B cell (primary cell): ENCODE measurements at regions of chr1 and their contacts with region 1.

Region 1: GRCh38 chr1:160098852-160099561 is 588 bp upstream of the IGSF8 start:
- DNase-seq: peak; percentile 96
- ATAC-seq: peak; percentile 91
- H3K4me3 ChIP-seq: peak overlapping the region; percentile 63 to 79 (median 72)
- H3K4me3 Mint-ChIP-seq: peak overlapping the region; percentile 88
- H3K27ac ChIP-seq: peak overlapping the region; percentile 95 to 99
- H3K27ac Mint-ChIP-seq: peak overlapping the region; percentile 86
- H3K4me1 ChIP-seq: peaks cover 33 to 45% of the 10 kb centered on the region in 2 donors
- H3K4me1 Mint-ChIP-seq: peaks cover 47% of the 10 kb centered on the region
- H3K27me3 ChIP-seq: no peaks in the 10 kb centered on the region
- H3K27me3 Mint-ChIP-seq: no peaks in the 10 kb centered on the region
- CTCF ChIP-seq: no peak

Region 2: DNA sequence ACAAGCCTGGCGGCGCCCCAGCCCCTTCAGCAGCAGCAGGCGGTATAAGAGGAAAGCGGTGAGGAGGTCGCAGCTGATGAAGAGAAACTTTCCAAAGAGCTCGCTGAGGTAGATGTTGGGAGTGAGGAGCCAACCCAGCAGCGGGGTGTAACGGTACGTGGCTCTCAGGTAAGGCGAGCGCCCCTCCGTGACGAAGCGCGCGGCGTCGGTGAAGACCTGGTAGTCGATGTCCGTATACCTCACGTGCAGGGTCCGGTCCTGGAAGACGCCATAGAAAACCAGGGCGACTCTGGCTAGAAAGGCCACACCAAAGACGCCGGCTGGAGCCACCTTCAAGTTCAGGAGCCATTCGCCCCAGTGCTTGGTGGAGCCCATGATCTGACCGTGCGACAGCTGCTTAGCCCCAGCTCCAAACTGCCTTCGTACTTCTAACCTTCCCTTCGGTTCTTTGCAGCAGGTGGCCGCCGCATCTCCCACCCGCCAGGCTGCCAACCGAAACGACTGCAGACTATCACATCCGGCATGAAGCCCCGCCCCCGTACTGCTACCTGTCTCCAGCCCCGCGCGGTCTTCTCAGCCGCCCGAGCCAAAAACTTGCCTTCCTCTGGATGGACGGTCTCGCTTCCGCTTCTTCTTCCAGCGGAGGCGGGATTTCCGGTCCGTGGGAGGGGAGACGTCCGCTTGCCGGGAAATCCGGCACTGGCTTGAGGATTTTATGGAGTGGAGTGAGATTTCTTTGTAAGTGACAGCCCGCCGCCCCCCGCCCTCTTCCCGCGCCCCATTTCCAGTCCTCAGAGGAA is 67.4 kb before region 1 on chr1 and contains the start of gene PIGM:
- CTCF ChIA-PET with region 1: interaction called, 14 read pairs
- POLR2A ChIA-PET with region 1: interaction called, 4 read pairs
- intact Hi-C with region 1: loop called (anchors 2 kb)
- DNase-seq: peak; percentile 90
- ATAC-seq: peak; percentile 96
- H3K4me3 ChIP-seq: peak within 1 kb of the TSS; percentile 51 to 78 (median 74)
- H3K4me3 Mint-ChIP-seq: peak within 1 kb of the TSS; percentile 99
- H3K27ac ChIP-seq: peak within 1 kb of the TSS in 1 of 2 donors; percentile 57
- H3K27ac Mint-ChIP-seq: peak within 1 kb of the TSS; percentile 88
- H3K4me1 ChIP-seq: peaks cover 19 to 20% of the 10 kb centered on the region in 2 donors
- H3K4me1 Mint-ChIP-seq: peaks cover 27% of the 10 kb centered on the region
- H3K27me3 ChIP-seq: no peaks in the 10 kb centered on the region
- H3K27me3 Mint-ChIP-seq: no peaks in the 10 kb centered on the region
- CTCF ChIP-seq: no peak
- total RNA-seq, gene PIGM: 6.0 and 7.4 TPM in 2 replicates

Region 3: DNA sequence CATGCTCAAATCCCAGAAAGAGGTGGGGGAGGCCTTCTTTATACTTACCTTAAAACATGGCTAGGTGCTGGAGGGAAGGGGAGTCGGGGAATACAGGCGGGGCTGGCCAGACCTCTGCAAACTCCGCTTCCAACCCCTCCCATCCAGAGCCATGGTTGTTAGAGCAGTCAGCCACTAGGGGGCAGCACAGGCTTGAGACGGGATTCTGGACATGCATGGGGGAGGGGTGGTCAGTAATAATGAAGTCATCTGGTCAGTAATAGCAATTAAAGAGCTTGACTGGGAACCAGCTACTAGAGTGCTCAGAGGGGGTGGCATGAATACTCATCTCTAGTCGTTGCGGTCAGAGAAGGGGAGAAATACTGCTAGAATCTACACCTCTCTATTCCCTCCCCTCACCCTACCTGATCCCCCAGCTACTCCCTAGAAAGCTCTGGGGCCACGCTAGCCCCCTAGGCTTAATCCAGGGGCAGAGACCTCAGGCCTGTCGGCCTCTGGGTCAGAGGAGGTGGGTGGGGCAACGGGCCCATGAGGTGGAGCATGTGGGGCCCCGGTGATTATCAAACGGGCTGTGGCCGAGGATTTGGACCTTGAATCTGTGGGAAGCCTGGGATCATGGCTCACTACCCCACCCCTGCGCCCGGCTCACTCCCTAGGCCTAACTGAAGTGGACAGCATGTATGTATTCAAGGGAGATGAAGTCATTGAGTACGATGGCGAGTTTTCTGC is 94.2 kb after region 1 on chr1:
- CTCF ChIA-PET with region 1: interaction called, 20 read pairs
- POLR2A ChIA-PET with region 1: interaction called, 3 read pairs
- intact Hi-C with region 1: loop called (anchors 1 kb)
- DNase-seq: peak; percentile 84
- ATAC-seq: peak; percentile 94
- H3K4me3 ChIP-seq: no peak overlapping the region
- H3K4me3 Mint-ChIP-seq: no peak overlapping the region
- H3K27ac ChIP-seq: no peak overlapping the region
- H3K27ac Mint-ChIP-seq: no peak overlapping the region
- H3K4me1 ChIP-seq: peaks cover 9 to 22% of the 10 kb centered on the region in 2 donors
- H3K4me1 Mint-ChIP-seq: peaks cover 3% of the 10 kb centered on the region
- H3K27me3 ChIP-seq: no peaks in the 10 kb centered on the region
- H3K27me3 Mint-ChIP-seq: peaks cover 3% of the 10 kb centered on the region
- CTCF ChIP-seq: peak; percentile 90

Region 4: DNA sequence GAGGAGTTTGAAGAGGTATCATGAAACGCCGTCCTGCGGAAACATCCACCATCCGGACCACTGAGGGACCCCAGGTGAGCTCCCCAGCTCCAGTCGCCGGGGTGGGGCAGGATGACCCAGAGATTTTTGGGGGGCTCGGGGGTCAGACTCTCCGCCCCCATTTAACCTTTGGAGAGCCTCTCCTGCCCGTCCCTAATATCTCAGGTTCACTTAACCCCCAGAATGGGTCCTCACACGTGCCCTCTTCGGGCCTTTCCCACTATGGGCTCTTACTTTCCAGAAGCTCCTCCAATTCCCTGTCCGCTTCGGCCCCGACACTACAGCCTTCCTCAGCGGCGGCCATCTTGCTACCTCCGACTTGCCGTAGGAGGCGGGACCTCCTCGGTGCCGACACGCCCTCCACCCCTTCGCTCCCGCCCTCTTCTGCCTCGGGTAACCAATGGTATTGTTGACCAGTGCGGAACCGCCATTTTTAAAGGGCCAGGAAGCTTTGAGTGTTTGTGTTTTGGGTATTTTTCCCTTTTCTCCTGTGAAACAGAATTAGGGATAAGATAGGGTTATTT is 185.9 kb after region 1 on chr1 and contains the start of gene PEX19:
- CTCF ChIA-PET with region 1: interaction called, 131 read pairs
- POLR2A ChIA-PET with region 1: interaction called, 3 read pairs
- intact Hi-C with region 1: loop called (anchors 1 kb)
- DNase-seq: peak; percentile 94
- ATAC-seq: peak; percentile 100
- H3K4me3 ChIP-seq: peak within 1 kb of the TSS; percentile 60 to 88 (median 78)
- H3K4me3 Mint-ChIP-seq: peak within 1 kb of the TSS; percentile 97
- H3K27ac ChIP-seq: peak within 1 kb of the TSS; percentile 26 to 75
- H3K27ac Mint-ChIP-seq: peak within 1 kb of the TSS; percentile 96
- H3K4me1 ChIP-seq: peaks cover 9 to 21% of the 10 kb centered on the region in 2 donors
- H3K4me1 Mint-ChIP-seq: peaks cover 21% of the 10 kb centered on the region
- H3K27me3 ChIP-seq: no peaks in the 10 kb centered on the region
- H3K27me3 Mint-ChIP-seq: no peaks in the 10 kb centered on the region
- CTCF ChIP-seq: no peak
- total RNA-seq, gene PEX19: 56.0 and 58.4 TPM in 2 replicates

Region 5: DNA sequence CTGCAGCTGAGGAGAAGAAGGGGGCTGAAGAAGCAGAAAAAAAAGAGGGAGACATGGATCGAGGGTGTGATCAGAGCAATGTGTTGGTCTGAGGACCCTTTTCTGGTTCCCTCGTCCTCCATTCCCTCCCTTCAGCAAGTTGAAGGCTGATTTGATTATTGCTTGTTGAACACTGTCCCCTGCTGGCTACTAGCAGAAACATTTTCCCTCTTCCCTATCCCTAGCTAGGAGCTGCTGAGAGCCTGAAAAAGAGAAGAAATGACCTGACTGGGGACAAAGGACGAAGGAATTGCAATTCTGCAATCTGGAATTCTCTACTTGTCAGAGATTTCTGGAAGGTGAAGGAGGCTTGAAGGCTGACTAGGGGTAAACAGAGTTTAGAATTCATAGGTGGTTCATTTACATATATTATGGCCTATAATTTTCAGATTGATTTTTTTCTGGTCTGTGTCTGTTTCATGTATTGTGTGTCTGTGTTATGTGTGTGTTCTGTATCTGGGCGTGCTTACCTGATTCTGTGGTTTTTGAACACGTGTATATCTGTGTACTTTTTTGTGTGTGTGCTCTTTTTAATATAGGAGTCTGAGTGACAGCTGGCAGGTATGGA is 277.6 kb after region 1 on chr1:
- CTCF ChIA-PET with region 1: interaction called, 75 read pairs
- POLR2A ChIA-PET with region 1: interaction called, 3 read pairs
- intact Hi-C with region 1: loop called (anchors 1 kb)
- DNase-seq: peak; percentile 76
- ATAC-seq: peak; percentile 67
- H3K4me3 ChIP-seq: peak overlapping the region in 1 of 5 experiments; percentile 21
- H3K4me3 Mint-ChIP-seq: peak overlapping the region; percentile 70
- H3K27ac ChIP-seq: no peak overlapping the region
- H3K27ac Mint-ChIP-seq: peak overlapping the region; percentile 60
- H3K4me1 ChIP-seq: peaks cover 19 to 23% of the 10 kb centered on the region in 2 donors
- H3K4me1 Mint-ChIP-seq: peaks cover 24% of the 10 kb centered on the region
- H3K27me3 ChIP-seq: no peaks in the 10 kb centered on the region
- H3K27me3 Mint-ChIP-seq: no peaks in the 10 kb centered on the region
- CTCF ChIP-seq: peak; percentile 83